PC-3 (cell line): ENCODE measurements at regions of chr13 and their contacts with region 1.

Region 1: DNA sequence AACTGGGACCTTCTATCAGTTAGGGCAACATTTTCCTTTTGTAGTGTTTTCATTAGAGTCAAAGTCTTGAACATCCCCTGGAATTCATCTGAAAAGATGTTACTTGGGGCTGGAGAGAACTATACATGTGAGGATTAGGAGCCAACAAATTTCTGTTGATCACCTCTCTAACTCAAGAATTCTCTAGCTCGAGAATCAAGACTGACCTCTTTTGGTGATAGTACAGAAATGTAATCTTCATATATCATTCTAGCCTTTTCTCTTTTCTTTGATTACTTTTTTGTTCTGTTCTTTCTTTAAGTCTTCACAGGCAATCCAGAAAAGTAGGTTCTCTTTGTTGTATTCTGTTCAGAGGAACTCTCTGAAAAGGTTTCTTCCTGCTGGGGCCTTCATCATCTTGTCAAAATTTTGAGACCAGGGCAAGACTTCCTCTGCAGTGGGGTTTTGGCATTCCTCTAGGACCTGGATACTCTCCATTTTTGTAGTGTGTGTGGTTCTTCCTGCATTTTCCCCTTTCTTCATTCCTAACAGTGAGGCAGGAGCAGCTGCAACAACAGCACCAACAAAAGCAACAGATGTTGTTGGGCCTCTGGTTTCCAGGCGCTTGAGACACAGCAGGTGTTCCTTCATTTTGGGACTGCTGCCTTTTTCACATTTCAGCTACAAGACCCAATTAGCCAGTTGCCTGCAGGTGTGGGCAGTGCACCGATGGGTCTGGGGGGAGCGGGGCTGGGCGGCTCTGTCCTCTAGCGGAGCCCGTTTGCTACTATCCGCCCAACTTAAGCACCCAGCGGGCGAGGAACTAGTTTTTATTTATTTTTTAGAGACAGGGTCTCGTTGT is 26.2 kb downstream of the ELF1 start:
- DNase-seq: peak; percentile 34
- ATAC-seq: no peak; the same call in 1 of the 2 replicates
- H3K4me3 ChIP-seq: peak overlapping the region; percentile 32; the same call in 1 of the 2 replicates
- H3K27ac ChIP-seq: peak overlapping the region; percentile 69
- H3K4me1 ChIP-seq: peaks cover 33% of the 10 kb centered on the region
- H3K27me3 ChIP-seq: no peaks in the 10 kb centered on the region
- CTCF ChIP-seq: peak; percentile 38; the same call in 1 of the 2 replicates

Region 2: GRCh38 chr13:40777166-40777808 is 215.6 kb before region 1 on chr13:
- CTCF ChIA-PET with region 1: no interaction called
- POLR2A ChIA-PET with region 1: no interaction called
- intact Hi-C with region 1: loop called (anchors 2 kb)
- DNase-seq: peak; percentile 55
- ATAC-seq: peak; percentile 88
- H3K4me3 ChIP-seq: peak overlapping the region; percentile 55
- H3K27ac ChIP-seq: peak overlapping the region; percentile 25; the same call in 1 of the 2 replicates
- H3K4me1 ChIP-seq: peaks cover 7% of the 10 kb centered on the region
- H3K27me3 ChIP-seq: no peaks in the 10 kb centered on the region
- CTCF ChIP-seq: peak; percentile 77

Region 3: GRCh38 chr13:41008349-41008980 is 15.6 kb after region 1 on chr13:
- CTCF ChIA-PET with region 1: no interaction called
- POLR2A ChIA-PET with region 1: no interaction called
- intact Hi-C with region 1: loop called (anchors 1 kb)
- DNase-seq: peak; percentile 78
- ATAC-seq: peak; percentile 75
- H3K4me3 ChIP-seq: peak overlapping the region; percentile 38
- H3K27ac ChIP-seq: peak overlapping the region; percentile 59
- H3K4me1 ChIP-seq: peaks cover 42% of the 10 kb centered on the region
- H3K27me3 ChIP-seq: no peaks in the 10 kb centered on the region
- CTCF ChIP-seq: no peak

Region 4: DNA sequence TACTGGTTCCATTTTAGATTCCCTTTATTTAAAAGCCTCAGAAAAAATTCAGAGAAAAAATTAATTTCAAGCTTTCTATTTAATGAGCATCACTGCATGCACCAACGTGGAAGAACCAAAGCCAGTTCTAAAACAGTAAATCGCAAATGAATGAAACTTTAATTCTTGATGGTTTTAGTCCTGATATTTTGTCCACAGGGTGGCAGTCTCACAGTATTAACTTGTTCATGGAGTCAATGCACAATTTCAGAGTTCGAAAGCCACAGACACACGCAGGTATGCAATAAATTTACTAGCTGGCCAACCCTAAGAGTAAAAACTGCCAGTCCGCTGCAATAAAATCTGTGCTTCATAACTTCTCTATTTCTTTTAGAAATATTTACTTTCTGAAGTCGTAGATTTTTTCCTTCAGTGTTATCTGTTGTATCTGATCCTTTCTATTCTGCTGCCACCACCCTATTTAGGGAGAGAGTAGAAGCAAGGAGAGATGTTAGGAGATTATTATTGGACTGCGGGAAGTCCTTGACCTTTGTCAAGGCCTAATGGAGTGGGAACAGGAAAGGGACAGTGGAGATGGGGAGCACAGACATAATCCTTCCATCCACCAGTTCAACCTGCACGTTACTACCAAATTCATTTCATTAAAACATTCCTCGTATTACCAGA is 61.4 kb after region 1 on chr13:
- CTCF ChIA-PET with region 1: no interaction called
- POLR2A ChIA-PET with region 1: no interaction called
- intact Hi-C with region 1: loop called (anchors 2 kb)
- DNase-seq: peak; percentile 72
- ATAC-seq: peak; percentile 76
- H3K4me3 ChIP-seq: peak overlapping the region; percentile 10; the same call in 1 of the 2 replicates
- H3K27ac ChIP-seq: peak overlapping the region; percentile 45; the same call in 1 of the 2 replicates
- H3K4me1 ChIP-seq: peaks cover 27% of the 10 kb centered on the region
- H3K27me3 ChIP-seq: no peaks in the 10 kb centered on the region
- CTCF ChIP-seq: peak; percentile 73